Transverse colon (tissue), 4 donors: ENCODE measurements at regions of chr22 and their contacts with region 1.

Region 1: DNA sequence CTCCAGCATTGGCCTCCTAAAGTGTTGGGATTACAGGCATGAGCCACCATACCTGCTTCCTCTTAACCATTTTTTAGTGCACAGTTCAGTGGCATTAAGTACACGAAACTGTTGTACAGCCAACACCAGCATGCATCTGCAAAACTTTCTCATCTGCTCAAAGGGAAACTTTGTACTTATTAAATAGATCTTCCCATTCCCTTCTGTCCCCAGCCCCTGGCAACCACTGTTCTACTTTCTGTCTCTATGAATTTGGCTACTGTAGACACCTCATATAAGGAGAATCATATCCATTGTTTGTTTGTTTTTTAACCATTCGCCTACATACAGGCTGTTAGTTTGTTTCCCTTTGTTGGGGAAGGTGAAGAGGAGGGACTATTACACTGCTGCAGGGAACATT is 6.5 kb upstream of the EP300 start:
- DNase-seq: no peak
- H3K4me3 ChIP-seq: no peak overlapping the region
- H3K27ac ChIP-seq: no peak overlapping the region
- H3K4me1 ChIP-seq: peaks cover 0 to 5% (median 0%) of the 10 kb centered on the region in 4 donors
- H3K27me3 ChIP-seq: no peaks in the 10 kb centered on the region
- CTCF ChIP-seq: no peak
- EP300 ChIP-seq: no peak
- POLR2A ChIP-seq: no peak

Region 2: GRCh38 chr22:40939202-40939601 is 146.6 kb before region 1 on chr22:
- in situ Hi-C with region 1: loop called in 1 of 4 experiments (anchors 5 kb)
- intact Hi-C with region 1: no loop called
- DNase-seq: no peak
- H3K4me3 ChIP-seq: no peak overlapping the region
- H3K27ac ChIP-seq: no peak overlapping the region
- H3K4me1 ChIP-seq: no peaks in the 10 kb centered on the region
- H3K27me3 ChIP-seq: no peaks in the 10 kb centered on the region
- CTCF ChIP-seq: no peak
- EP300 ChIP-seq: no peak
- POLR2A ChIP-seq: no peak

Region 3: DNA sequence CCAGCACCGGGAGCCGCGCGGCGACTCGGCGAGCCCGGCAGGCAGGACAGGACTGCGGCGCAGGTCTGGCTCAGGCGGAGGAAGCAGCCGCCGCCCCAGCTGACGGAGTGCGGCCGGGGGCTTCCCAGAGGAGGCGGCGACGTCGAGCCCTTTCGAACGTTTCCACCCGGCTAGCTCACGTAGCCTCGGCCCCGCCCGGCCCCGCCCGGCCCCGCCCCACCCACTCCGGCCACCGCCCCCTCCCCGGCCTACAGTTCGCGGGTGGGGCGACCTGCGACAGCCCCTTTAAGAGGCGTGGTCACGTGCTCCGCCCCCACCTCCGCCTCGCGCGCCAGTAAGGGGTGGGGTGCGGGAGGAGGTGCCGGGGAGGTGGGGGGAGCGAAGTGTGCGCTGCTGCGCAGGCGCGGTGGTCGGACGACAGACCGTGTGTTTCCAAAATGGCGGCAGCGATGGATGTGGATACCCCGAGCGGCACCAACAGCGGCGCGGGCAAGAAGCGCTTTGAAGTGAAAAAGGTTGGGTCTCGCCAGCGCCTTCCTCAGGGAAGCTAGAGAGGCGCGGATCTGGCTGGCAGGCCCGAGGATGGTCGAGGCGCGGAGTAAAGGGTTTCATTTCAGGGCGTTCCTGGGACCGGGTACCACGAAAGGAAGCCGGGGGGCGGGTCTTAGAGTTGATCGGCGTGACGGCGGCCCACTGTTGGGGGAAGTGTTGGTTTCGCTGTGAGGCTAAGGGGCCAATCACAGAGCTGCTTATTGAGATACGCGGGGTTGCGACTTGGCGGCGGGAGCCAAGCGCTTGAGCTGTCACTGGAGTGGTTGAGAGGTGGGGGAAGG is 134.7 kb before region 1 on chr22 and contains the start of gene RBX1:
- in situ Hi-C with region 1: loop called in 3 of 4 experiments (anchors 5 to 10 kb)
- intact Hi-C with region 1: loop called (anchors 1 kb)
- DNase-seq: peak; percentile 99
- H3K4me3 ChIP-seq: peak within 1 kb of the TSS; percentile 69 to 94 (median 74)
- H3K27ac ChIP-seq: peak within 1 kb of the TSS; percentile 92 to 98 (median 96)
- H3K4me1 ChIP-seq: peaks cover 10 to 29% (median 15%) of the 10 kb centered on the region in 4 donors
- H3K27me3 ChIP-seq: no peaks in the 10 kb centered on the region
- CTCF ChIP-seq: no peak
- EP300 ChIP-seq: peak; percentile 50
- POLR2A ChIP-seq: peak; percentile 94
- total RNA-seq, gene RBX1: 7.8 to 36.9 (median 24.9) TPM